Caco-2 (cell line): ENCODE measurements at regions of chr20 and their contacts with region 1.

Region 1: GRCh38 chr20:47785854-47786764 is 828 bp upstream of the SULF2 start:
- DNase-seq: peak; percentile 89 to 91
- H3K4me3 ChIP-seq: peak overlapping the region; percentile 55
- H3K4me3 Mint-ChIP-seq: peak overlapping the region; percentile 96
- H3K27ac Mint-ChIP-seq: peak overlapping the region; percentile 85
- H3K4me1 ChIP-seq: peaks cover 19% of the 10 kb centered on the region
- H3K4me1 Mint-ChIP-seq: peaks cover 35% of the 10 kb centered on the region
- H3K27me3 ChIP-seq: no peaks in the 10 kb centered on the region
- H3K27me3 Mint-ChIP-seq: peaks cover 2% of the 10 kb centered on the region
- CTCF ChIP-seq: peak; percentile 93

Region 2: GRCh38 chr20:47677635-47678453 is 108.3 kb before region 1 on chr20:
- CTCF ChIA-PET with region 1: no interaction called
- POLR2A ChIA-PET with region 1: no interaction called
- intact Hi-C with region 1: loop called (anchors 1 kb)
- DNase-seq: peak; percentile 87 to 93
- H3K4me3 ChIP-seq: no peak overlapping the region
- H3K4me3 Mint-ChIP-seq: no peak overlapping the region
- H3K27ac Mint-ChIP-seq: peak overlapping the region; percentile 31
- H3K4me1 ChIP-seq: peaks cover 27% of the 10 kb centered on the region
- H3K4me1 Mint-ChIP-seq: no peaks in the 10 kb centered on the region
- H3K27me3 ChIP-seq: no peaks in the 10 kb centered on the region
- H3K27me3 Mint-ChIP-seq: no peaks in the 10 kb centered on the region
- CTCF ChIP-seq: peak; percentile 99 to 100

Region 3: GRCh38 chr20:47735412-47736400 is 50.4 kb before region 1 on chr20:
- CTCF ChIA-PET with region 1: no interaction called
- POLR2A ChIA-PET with region 1: no interaction called
- intact Hi-C with region 1: no loop called
- DNase-seq: no peak
- H3K4me3 ChIP-seq: no peak overlapping the region
- H3K4me3 Mint-ChIP-seq: no peak overlapping the region
- H3K27ac Mint-ChIP-seq: no peak overlapping the region
- H3K4me1 ChIP-seq: no peaks in the 10 kb centered on the region
- H3K4me1 Mint-ChIP-seq: no peaks in the 10 kb centered on the region
- H3K27me3 ChIP-seq: no peaks in the 10 kb centered on the region
- H3K27me3 Mint-ChIP-seq: no peaks in the 10 kb centered on the region
- CTCF ChIP-seq: no peak

Region 4: GRCh38 chr20:47854163-47854562 is 68.1 kb after region 1 on chr20:
- CTCF ChIA-PET with region 1: no interaction called
- POLR2A ChIA-PET with region 1: no interaction called
- intact Hi-C with region 1: loop called (anchors 1 kb)
- DNase-seq: no peak
- H3K4me3 ChIP-seq: no peak overlapping the region
- H3K4me3 Mint-ChIP-seq: no peak overlapping the region
- H3K27ac Mint-ChIP-seq: no peak overlapping the region
- H3K4me1 ChIP-seq: peaks cover 13% of the 10 kb centered on the region
- H3K4me1 Mint-ChIP-seq: peaks cover 13% of the 10 kb centered on the region
- H3K27me3 ChIP-seq: no peaks in the 10 kb centered on the region
- H3K27me3 Mint-ChIP-seq: peaks cover 8% of the 10 kb centered on the region
- CTCF ChIP-seq: no peak

Region 5: DNA sequence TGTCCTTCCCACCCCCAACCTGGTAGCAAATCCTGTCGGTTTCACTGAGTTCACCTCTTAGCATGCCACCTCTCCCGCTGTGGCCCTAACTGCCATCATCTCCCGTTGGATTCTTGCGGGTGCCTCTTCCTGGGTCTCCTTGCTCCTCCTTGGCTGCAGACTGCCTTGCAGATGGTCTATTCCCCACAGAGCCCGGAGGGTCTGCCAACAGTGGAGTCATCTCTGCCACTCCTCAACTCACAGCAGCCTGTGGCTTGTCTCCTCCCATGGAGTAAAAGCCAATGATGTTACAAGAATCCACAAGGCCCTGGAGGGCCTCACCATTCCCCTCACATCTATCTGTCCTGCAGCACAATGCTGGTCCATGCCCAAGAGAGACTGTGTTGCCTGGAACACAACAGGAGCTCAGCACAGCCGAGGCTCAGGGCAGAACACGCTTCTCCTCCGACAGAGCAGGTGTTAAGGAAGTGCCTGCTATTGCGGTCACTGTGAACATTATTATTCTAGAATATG is 240.9 kb after region 1 on chr20:
- CTCF ChIA-PET with region 1: interaction called, 10 read pairs
- POLR2A ChIA-PET with region 1: no interaction called
- intact Hi-C with region 1: no loop called
- DNase-seq: no peak
- H3K4me3 ChIP-seq: no peak overlapping the region
- H3K4me3 Mint-ChIP-seq: no peak overlapping the region
- H3K27ac Mint-ChIP-seq: no peak overlapping the region
- H3K4me1 ChIP-seq: no peaks in the 10 kb centered on the region
- H3K4me1 Mint-ChIP-seq: no peaks in the 10 kb centered on the region
- H3K27me3 ChIP-seq: peaks cover 1% of the 10 kb centered on the region; the same call in 1 of the 2 replicates
- H3K27me3 Mint-ChIP-seq: peaks cover 27% of the 10 kb centered on the region
- CTCF ChIP-seq: no peak

Region 6: DNA sequence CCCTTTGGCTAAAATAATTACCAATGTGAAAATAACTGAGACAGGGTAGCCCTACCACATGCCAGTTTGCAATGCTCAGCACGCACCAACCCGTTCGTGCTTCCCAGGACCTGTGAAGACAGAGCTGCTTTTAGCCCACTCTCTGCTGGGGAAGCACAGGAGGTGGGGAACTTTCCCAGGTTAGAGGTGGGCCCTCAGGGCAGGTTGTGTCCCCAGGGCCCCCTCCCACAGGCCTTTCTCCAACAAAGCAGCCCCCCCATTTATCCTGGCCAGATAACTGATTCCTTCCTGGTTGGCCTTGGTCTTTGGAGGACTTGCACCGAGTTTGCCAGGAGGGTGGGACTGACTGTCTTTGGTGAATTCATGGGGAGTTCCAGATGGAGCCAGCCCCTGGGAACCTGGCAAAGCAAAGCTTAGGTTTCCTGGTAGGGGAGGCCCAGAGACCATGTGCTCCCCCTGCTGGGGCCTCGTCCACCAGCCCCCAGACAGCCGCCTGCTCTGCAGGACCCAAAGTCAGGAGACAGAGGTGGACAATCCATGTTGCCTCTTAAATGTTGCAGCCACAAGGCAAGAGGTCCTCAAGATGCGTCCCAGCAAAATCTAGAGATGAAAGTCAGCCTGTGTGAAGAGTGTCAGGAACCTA is 543.6 kb after region 1 on chr20:
- CTCF ChIA-PET with region 1: interaction called, 3 read pairs
- POLR2A ChIA-PET with region 1: no interaction called
- intact Hi-C with region 1: loop called (anchors 1 kb)
- DNase-seq: peak; percentile 73 to 76
- H3K4me3 ChIP-seq: no peak overlapping the region
- H3K4me3 Mint-ChIP-seq: no peak overlapping the region
- H3K27ac Mint-ChIP-seq: no peak overlapping the region
- H3K4me1 ChIP-seq: peaks cover 27% of the 10 kb centered on the region
- H3K4me1 Mint-ChIP-seq: peaks cover 38% of the 10 kb centered on the region
- H3K27me3 ChIP-seq: no peaks in the 10 kb centered on the region
- H3K27me3 Mint-ChIP-seq: no peaks in the 10 kb centered on the region
- CTCF ChIP-seq: peak; percentile 82

Region 7: GRCh38 chr20:49054056-49054643 is 1268.0 kb after region 1 on chr20:
- CTCF ChIA-PET with region 1: no interaction called
- POLR2A ChIA-PET with region 1: no interaction called
- intact Hi-C with region 1: no loop called
- DNase-seq: no peak
- H3K4me3 ChIP-seq: no peak overlapping the region
- H3K4me3 Mint-ChIP-seq: no peak overlapping the region
- H3K27ac Mint-ChIP-seq: no peak overlapping the region
- H3K4me1 ChIP-seq: peaks cover 27% of the 10 kb centered on the region
- H3K4me1 Mint-ChIP-seq: peaks cover 17% of the 10 kb centered on the region
- H3K27me3 ChIP-seq: no peaks in the 10 kb centered on the region
- H3K27me3 Mint-ChIP-seq: no peaks in the 10 kb centered on the region
- CTCF ChIP-seq: no peak